Breast epithelium (tissue), 4 donors: ENCODE measurements at regions of chr14 and their contacts with region 1.

Region 1: DNA sequence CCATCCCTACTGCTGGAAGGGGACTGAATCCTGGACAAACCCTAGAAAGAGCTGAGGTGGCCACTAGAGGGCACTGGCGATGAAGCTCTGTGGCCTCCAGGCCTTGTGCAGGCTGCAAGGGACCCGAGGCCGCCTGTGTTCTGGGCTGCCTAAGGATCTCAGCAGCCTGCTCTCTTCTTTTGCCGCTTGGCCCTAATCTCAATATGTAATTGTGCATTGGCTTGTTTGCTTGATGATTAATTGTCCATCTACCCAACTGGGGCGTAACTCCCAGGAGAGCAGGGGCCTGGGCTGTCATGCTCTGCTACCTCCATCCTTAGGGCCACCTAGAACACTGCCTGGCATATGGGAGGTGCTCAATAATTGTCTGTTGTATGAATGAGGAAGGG is 73.8 kb downstream of the SYNE3 start:
- DNase-seq: peak; percentile 58 to 73
- H3K4me3 ChIP-seq: no peak overlapping the region
- H3K27ac ChIP-seq: peak overlapping the region in 1 of 2 donors; percentile 14
- H3K4me1 ChIP-seq: no peaks in the 10 kb centered on the region
- H3K27me3 ChIP-seq: no peaks in the 10 kb centered on the region
- CTCF ChIP-seq: peak; percentile 61 to 90 (median 85)
- POLR2A ChIP-seq: no peak

Region 2: GRCh38 chr14:95515596-95516552 is 73.2 kb after region 1 on chr14:
- intact Hi-C with region 1: loop called (anchors 10 kb)
- DNase-seq: peak in 1 of 2 donors; percentile 40
- H3K4me3 ChIP-seq: peak overlapping the region; percentile 79 to 94 (median 81)
- H3K27ac ChIP-seq: peak overlapping the region; percentile 79 to 93
- H3K4me1 ChIP-seq: peaks cover 11 to 19% of the 10 kb centered on the region in 2 donors
- H3K27me3 ChIP-seq: no peaks in the 10 kb centered on the region
- CTCF ChIP-seq: peak in 2 of 3 donors; percentile 32 to 33
- POLR2A ChIP-seq: no peak

Region 3: DNA sequence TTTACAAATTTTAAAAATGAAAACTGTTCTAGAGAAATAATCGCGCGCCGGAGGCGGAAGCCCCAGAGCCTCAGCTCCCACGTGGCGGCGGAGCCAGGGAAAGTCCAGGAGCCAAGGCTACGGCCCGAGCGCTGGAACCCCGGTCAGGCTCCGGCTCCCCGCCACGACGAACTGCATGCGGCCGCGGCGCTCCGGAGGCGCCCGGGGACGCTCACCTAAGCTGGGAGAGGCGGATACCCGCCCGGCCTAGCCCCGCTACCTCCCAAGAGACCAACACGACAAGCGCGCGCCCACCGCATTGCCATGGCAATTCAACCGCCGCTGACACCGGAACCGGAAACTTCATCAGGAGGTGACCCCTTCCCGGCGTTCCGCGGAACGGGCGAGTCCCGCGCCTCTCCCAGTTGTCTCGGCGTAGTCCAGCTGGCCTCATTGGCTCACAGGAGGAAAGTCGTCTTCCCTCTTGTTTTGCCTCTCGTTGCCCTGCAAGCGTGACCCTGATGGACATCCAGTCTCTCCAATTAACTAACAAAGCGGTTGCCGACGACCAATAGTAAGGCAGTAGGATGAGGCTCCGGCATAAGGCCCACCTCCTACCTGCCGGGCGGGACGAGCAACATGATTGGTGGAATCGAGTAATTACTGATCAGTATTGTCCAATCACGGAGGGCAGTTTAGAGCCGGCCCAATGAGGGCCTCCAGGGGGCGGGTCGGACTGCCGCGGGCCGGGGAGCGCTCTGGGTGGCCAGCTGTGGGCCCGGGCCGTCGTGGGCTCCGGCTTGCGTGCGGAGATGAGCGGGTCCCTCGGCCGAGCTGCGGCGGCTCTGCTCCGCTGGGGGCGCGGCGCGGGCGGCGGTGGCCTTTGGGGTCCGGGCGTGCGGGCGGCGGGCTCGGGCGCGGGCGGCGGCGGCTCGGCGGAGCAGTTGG is 91.9 kb after region 1 on chr14 and contains the start of gene GLRX5:
- intact Hi-C with region 1: loop called (anchors 5 kb)
- DNase-seq: peak; percentile 98 to 100
- H3K4me3 ChIP-seq: peak within 1 kb of the TSS; percentile 70 to 97 (median 94)
- H3K27ac ChIP-seq: peak within 1 kb of the TSS; percentile 83 to 93
- H3K4me1 ChIP-seq: peaks cover 9 to 35% of the 10 kb centered on the region in 2 donors
- H3K27me3 ChIP-seq: no peaks in the 10 kb centered on the region
- CTCF ChIP-seq: peak in 1 of 3 donors; percentile 7
- POLR2A ChIP-seq: peak; percentile 47
- total RNA-seq, gene GLRX5: 29.1 to 36.1 (median 33.6) TPM